Activated CD4-positive, alpha-beta T cell treated with anti-CD3 and anti-CD28 coated beads, Interleukin-2, amount 10 ng/mL, durations not matched to agents 24 days and 14 days (primary cell): ENCODE measurements at regions of chr3 and their contacts with region 1.

Region 1: GRCh38 chr3:127455541-127456450 is 134.7 kb downstream of the TPRA1 start:
- DNase-seq: peak; percentile 87
- H3K4me3 Mint-ChIP-seq: no peak overlapping the region
- H3K27ac Mint-ChIP-seq: no peak overlapping the region
- H3K4me1 Mint-ChIP-seq: no peaks in the 10 kb centered on the region
- H3K27me3 Mint-ChIP-seq: peaks cover 53% of the 10 kb centered on the region

Region 2: GRCh38 chr3:126522363-126522788 is 933.4 kb before region 1 on chr3:
- intact Hi-C with region 1: loop called (anchors 2 kb)
- DNase-seq: peak; percentile 82
- H3K4me3 Mint-ChIP-seq: no peak overlapping the region
- H3K27ac Mint-ChIP-seq: no peak overlapping the region
- H3K4me1 Mint-ChIP-seq: no peaks in the 10 kb centered on the region
- H3K27me3 Mint-ChIP-seq: peaks cover 15% of the 10 kb centered on the region

Region 3: DNA sequence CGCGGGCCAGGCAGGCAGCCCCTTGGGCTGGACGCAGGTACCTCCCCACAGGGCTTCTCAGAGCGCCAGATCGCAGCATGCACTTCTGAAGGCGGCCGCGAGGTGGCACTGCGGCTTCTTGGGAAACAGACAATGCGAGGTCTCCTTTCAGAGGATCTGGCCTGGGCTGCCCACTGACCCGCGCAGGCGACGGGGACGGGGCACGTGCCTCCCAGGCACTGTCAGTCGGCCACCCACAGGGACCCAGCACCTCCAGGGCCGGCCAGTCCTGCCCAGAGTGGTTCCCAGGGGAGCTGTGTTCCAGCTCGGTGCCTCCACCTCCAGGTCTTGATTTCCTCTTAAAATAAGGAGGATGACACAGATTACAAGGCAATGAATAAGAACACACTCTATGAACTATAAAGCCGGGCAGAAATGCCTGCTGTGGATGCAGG is 776.5 kb before region 1 on chr3:
- intact Hi-C with region 1: loop called (anchors 1 kb)
- DNase-seq: peak; percentile 93
- H3K4me3 Mint-ChIP-seq: no peak overlapping the region
- H3K27ac Mint-ChIP-seq: no peak overlapping the region
- H3K4me1 Mint-ChIP-seq: peaks cover 3% of the 10 kb centered on the region
- H3K27me3 Mint-ChIP-seq: peaks cover 19% of the 10 kb centered on the region

Region 4: GRCh38 chr3:126752303-126752842 is 703.4 kb before region 1 on chr3:
- intact Hi-C with region 1: loop called (anchors 5 kb)
- DNase-seq: peak; percentile 88
- H3K4me3 Mint-ChIP-seq: no peak overlapping the region
- H3K27ac Mint-ChIP-seq: no peak overlapping the region
- H3K4me1 Mint-ChIP-seq: peaks cover 6% of the 10 kb centered on the region
- H3K27me3 Mint-ChIP-seq: no peaks in the 10 kb centered on the region